GM12878 (cell line): ENCODE measurements at regions of chr18 and their contacts with region 1.

Region 1: DNA sequence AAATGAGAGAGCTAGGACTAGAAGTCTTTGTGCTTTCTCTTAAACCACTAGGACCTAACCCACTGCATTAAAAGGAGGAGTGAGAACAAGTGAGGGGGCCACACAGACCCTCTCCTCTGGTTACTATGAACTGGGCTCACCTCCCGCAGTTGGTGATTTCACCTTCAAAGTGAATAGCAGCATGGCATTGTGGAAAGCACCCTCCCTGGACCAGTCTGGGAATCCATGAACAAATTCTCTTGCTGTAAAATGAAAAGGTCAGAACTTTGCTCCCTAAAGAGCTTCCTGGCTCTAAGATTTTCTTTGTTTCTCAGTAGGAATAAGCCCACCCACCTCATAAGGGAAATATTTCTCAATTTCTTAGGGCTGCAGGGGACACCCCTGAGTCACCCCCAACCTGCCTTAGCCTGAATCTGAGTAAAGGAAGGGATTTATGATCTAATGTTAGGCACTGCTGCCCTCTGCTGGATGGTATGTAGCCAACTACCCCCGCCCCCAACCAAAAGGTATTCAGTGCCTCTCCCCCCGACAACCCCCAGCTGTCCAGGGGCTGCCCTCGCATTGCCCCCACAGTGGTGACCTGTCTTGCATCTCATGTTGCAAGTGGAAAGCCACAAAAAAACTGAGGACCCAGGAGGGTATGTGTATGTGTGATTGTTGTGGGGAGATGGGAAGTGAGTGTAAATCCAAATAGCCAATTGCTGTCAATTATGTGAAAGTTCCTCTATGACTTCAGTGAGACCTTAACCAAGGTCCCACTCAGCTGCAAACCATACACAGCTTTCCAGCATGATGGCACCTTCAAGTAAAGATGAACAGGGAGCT is 230.9 kb upstream of the SLC14A2 start:
- DNase-seq: peak; percentile 8
- ATAC-seq: peak; percentile 87
- H3K4me3 ChIP-seq: no peak overlapping the region
- H3K27ac ChIP-seq: no peak overlapping the region
- H3K4me1 ChIP-seq: no peaks in the 10 kb centered on the region
- H3K27me3 ChIP-seq: peaks cover 0 to 2% of the 10 kb centered on the region in 2 experiments; a peak in 1 of 4 replicates
- CTCF ChIP-seq: peak; percentile 51 to 72 (median 67); a peak in 5 of 6 replicates
- EP300 ChIP-seq: no peak
- POLR2A ChIP-seq: no peak
- RAD21 ChIP-seq: peak; percentile 83

Region 2: DNA sequence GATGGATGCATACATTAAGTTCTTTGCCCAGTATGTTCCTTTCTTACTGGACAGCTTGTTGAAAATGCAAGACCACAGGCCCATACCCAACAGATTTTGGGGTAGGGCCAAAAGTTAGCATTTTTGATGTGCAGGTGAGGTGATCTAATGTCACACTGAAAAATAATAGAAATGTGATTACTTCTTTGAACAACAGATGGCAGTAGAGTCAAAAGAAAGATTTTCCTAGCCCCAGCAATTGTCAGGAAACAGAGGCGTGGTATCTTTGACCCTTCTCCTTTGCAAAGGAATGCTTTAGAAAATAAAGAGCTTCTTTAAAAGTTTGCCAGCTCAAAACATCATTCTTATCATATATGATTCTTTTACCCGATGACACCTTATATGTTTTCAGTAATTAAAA is 1763.4 kb before region 1 on chr18:
- CTCF ChIA-PET with region 1: interaction called, 23 read pairs
- POLR2A ChIA-PET with region 1: no interaction called
- RAD21 ChIA-PET with region 1: interaction called, 5 read pairs
- SMC1A ChIA-PET with region 1: interaction called, 3 read pairs
- in situ Hi-C with region 1: loop called (anchors 5 kb)
- intact Hi-C with region 1: loop called (anchors 1 kb)
- DNase-seq: no peak
- ATAC-seq: peak; percentile 64
- H3K4me3 ChIP-seq: no peak overlapping the region
- H3K27ac ChIP-seq: no peak overlapping the region
- H3K4me1 ChIP-seq: no peaks in the 10 kb centered on the region
- H3K27me3 ChIP-seq: no peaks in the 10 kb centered on the region
- CTCF ChIP-seq: peak; percentile 39 to 56 (median 52)
- EP300 ChIP-seq: no peak
- POLR2A ChIP-seq: no peak
- RAD21 ChIP-seq: peak; percentile 64

Region 3: DNA sequence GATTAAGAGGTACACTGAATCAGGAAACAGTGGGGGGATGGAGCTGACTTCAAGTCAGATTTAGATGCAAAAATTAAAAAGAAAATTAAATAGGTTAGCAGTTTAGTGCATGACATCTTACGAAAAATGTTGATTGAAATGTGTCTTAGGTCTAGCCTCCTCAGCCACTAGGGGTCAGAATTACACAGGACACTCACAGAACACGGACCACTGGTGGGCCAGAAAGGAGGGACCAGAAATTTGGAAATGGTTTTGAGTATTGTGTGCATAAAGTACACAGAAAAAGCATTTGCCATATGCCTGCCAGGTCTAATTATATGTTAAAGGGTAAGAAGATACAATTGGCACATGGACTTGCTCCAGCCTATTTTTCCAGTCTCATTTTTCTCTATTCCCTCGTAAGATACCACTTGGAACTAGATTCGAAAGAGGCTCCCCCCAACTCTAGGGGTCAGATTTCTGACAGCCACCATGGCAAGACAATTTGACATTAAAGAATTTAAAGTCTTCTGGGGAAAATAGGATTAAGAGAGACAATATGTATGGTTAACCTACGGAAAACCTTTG is 1253.9 kb before region 1 on chr18:
- CTCF ChIA-PET with region 1: interaction called, 26 read pairs
- POLR2A ChIA-PET with region 1: no interaction called
- RAD21 ChIA-PET with region 1: interaction called, 3 read pairs
- SMC1A ChIA-PET with region 1: interaction called, 7 read pairs
- in situ Hi-C with region 1: loop called (anchors 10 kb)
- intact Hi-C with region 1: loop called (anchors 1 kb)
- DNase-seq: no peak
- ATAC-seq: peak; percentile 82
- H3K4me3 ChIP-seq: no peak overlapping the region
- H3K27ac ChIP-seq: no peak overlapping the region
- H3K4me1 ChIP-seq: no peaks in the 10 kb centered on the region
- H3K27me3 ChIP-seq: no peaks in the 10 kb centered on the region
- CTCF ChIP-seq: peak; percentile 53 to 69 (median 57)
- EP300 ChIP-seq: no peak
- POLR2A ChIP-seq: no peak
- RAD21 ChIP-seq: peak; percentile 76

Region 4: DNA sequence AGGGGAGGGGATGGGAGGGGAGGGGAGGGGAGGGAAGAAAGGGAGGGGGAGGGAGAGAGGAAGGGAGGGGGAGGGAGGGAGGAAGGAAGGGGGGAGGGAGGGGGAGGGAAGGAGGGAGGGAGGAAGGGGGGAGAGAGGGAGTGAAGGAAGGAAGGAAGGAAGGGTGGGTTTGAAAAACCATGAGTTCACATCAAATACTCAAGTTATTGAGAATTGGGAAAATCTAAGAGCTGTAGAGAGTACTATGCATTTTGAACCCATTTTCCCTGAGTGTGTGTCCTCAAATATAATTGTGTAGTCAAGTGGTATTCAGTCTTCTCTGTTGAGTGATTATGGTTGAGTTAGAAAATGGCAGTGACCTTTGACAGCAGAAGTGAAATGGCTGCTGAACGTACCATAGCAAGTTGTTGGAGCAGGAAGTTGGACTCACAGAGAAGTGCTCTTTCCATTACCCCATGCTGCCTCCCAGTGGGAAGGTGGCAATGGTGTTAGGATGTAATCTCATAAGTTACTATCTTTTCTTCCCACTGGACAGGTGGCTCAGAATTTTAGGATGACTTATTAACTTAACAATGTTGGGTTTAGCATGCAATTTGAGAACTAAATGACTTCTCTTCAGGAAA is 489.1 kb before region 1 on chr18:
- CTCF ChIA-PET with region 1: interaction called, 3 read pairs
- POLR2A ChIA-PET with region 1: no interaction called
- RAD21 ChIA-PET with region 1: no interaction called
- SMC1A ChIA-PET with region 1: no interaction called
- in situ Hi-C with region 1: no loop called
- intact Hi-C with region 1: loop called (anchors 5 kb)
- DNase-seq: peak; percentile 53
- ATAC-seq: peak; percentile 86
- H3K4me3 ChIP-seq: no peak overlapping the region
- H3K27ac ChIP-seq: no peak overlapping the region
- H3K4me1 ChIP-seq: no peaks in the 10 kb centered on the region
- H3K27me3 ChIP-seq: no peaks in the 10 kb centered on the region
- CTCF ChIP-seq: peak; percentile 44 to 56 (median 48); a peak in 4 of 6 replicates
- EP300 ChIP-seq: no peak
- POLR2A ChIP-seq: no peak
- RAD21 ChIP-seq: peak; percentile 61

Region 5: DNA sequence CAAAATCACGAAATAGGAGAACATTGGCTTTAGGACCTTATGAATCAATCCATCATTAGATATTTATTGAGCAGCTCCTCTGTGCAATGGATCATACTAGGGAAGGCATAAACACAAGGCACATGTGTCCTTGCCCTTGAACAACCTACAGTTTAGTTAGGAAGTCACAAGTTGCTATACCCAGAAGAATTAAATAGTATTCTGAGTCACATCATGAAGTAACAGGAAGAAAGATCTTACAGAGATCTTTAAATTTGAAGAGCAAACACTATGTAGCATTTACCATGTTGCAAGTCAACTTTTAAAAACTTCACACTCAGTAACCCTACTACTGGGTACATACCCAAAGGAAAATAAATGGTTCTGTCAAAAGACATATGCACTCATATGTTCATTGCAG is 124.2 kb before region 1 on chr18:
- CTCF ChIA-PET with region 1: no interaction called
- POLR2A ChIA-PET with region 1: no interaction called
- RAD21 ChIA-PET with region 1: no interaction called
- SMC1A ChIA-PET with region 1: no interaction called
- in situ Hi-C with region 1: no loop called
- intact Hi-C with region 1: no loop called
- DNase-seq: no peak
- ATAC-seq: no peak
- H3K4me3 ChIP-seq: no peak overlapping the region
- H3K27ac ChIP-seq: no peak overlapping the region
- H3K4me1 ChIP-seq: no peaks in the 10 kb centered on the region
- H3K27me3 ChIP-seq: no peaks in the 10 kb centered on the region
- CTCF ChIP-seq: no peak
- EP300 ChIP-seq: no peak
- POLR2A ChIP-seq: no peak
- RAD21 ChIP-seq: no peak

Region 6: GRCh38 chr18:45282101-45282812 is 102.1 kb before region 1 on chr18:
- CTCF ChIA-PET with region 1: interaction called, 78 read pairs
- POLR2A ChIA-PET with region 1: no interaction called
- RAD21 ChIA-PET with region 1: interaction called, 6 read pairs
- SMC1A ChIA-PET with region 1: interaction called, 6 read pairs
- in situ Hi-C with region 1: no loop called
- intact Hi-C with region 1: loop called (anchors 2 kb)
- DNase-seq: no peak
- ATAC-seq: peak; percentile 80
- H3K4me3 ChIP-seq: no peak overlapping the region
- H3K27ac ChIP-seq: no peak overlapping the region
- H3K4me1 ChIP-seq: no peaks in the 10 kb centered on the region
- H3K27me3 ChIP-seq: peaks cover 3% of the 10 kb centered on the region in 2 experiments; a peak in 3 of 4 replicates
- CTCF ChIP-seq: peak; percentile 16 to 46 (median 32); a peak in 4 of 6 replicates
- EP300 ChIP-seq: no peak
- POLR2A ChIP-seq: no peak
- RAD21 ChIP-seq: no peak